Testis (tissue), 5 donors: ENCODE measurements at regions of chr7 and their contacts with region 1.

Region 1: DNA sequence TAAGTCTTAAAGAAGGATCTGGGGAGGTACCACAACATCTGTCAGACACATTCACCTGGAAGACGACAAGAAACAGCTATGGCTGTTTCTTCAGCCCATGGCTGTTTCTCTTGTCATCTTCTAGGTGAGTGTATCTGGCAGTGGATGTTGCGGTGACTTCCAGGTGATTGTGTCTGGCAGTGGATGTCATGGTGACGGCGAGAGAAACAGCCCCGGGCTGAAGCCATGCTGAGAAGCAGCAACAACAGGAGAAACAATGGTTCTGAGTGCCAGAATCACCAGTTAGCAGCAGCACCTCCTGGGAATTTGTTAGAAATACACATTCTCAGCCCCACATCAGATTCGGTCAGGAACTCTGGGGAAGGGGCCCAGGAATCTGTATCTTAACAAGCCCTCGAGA is 68.6 kb upstream of the SYPL1 start:
- DNase-seq: no peak
- H3K4me3 ChIP-seq: no peak overlapping the region
- H3K27ac ChIP-seq: no peak overlapping the region
- H3K4me1 ChIP-seq: peaks cover 8% of the 10 kb centered on the region
- H3K27me3 ChIP-seq: no peaks in the 10 kb centered on the region
- CTCF ChIP-seq: no peak
- POLR2A ChIP-seq: no peak

Region 2: DNA sequence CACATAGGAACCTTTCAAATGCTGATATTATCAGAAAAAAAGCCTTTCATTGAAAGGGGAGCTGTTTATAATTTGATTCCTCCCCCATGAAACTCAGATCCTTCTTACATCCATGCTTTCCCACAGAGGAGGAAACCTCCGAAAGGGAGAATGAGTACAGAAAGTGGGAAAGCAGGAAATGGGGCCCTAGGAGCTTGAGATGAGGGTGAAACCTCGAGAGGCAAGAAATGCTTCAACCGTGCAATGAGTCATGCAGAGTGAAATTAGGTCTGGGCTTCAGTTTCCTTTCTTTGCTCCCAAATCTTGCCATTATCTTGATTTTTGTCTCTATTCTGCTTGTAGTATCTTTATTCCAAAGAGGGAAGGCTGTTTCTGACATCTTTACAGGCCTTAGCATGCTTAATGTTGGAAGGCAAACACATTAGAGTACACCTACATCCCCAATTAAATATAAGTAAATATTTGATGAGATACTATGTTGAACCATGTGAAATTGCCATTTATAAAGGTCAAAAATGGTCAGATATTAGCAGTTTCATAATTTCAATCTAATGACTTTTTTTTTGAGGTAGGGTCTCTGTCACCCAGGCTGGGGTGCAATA is 25.0 kb after region 1 on chr7:
- intact Hi-C with region 1: no loop called
- DNase-seq: no peak
- H3K4me3 ChIP-seq: no peak overlapping the region
- H3K27ac ChIP-seq: no peak overlapping the region
- H3K4me1 ChIP-seq: no peaks in the 10 kb centered on the region
- H3K27me3 ChIP-seq: no peaks in the 10 kb centered on the region
- CTCF ChIP-seq: no peak
- POLR2A ChIP-seq: no peak

Region 3: DNA sequence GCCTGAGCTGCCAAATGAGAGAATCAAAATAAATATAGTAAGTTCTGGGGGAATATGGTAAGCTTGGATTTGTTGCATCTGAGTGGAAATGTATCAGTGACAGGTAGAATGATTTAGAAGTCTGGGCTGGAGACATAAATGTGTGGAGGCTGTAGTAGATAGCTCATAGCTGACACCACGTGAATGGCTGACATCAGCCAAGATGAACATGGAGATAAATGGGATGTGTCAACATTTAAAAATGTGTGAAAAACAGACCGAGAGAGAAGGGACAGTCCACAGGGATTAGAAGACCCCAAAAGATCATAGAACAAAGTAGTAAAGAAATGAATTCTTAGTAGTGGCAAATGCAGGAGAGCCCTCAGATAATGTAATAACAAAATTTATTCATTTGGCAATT is 63.2 kb after region 1 on chr7:
- intact Hi-C with region 1: no loop called
- DNase-seq: no peak
- H3K4me3 ChIP-seq: no peak overlapping the region
- H3K27ac ChIP-seq: no peak overlapping the region
- H3K4me1 ChIP-seq: no peaks in the 10 kb centered on the region
- H3K27me3 ChIP-seq: no peaks in the 10 kb centered on the region
- CTCF ChIP-seq: no peak
- POLR2A ChIP-seq: no peak

Region 4: DNA sequence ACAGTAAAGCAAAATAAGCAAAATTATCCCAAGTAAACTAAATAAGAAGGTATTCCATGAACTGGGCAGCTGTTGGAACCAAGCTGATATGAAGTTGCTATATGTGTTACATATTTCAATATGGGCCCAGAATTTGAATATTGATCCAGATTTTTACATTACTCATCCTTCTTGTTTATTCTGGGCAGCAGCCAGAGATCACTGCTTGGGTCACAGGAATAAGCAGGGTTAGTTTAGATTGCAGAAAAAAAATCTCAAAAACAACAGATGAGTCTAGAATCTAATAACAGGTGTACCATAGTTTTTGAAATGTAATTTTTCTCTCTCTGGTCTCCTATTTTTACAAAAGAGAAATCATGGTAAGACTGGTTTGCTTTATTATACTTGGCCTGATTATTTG is 275.6 kb after region 1 on chr7:
- intact Hi-C with region 1: loop called (anchors 5 kb)
- DNase-seq: no peak
- H3K4me3 ChIP-seq: no peak overlapping the region
- H3K27ac ChIP-seq: no peak overlapping the region
- H3K4me1 ChIP-seq: no peaks in the 10 kb centered on the region
- H3K27me3 ChIP-seq: no peaks in the 10 kb centered on the region
- CTCF ChIP-seq: no peak
- POLR2A ChIP-seq: no peak